ENCODE measurements at regions of chr5 and their contacts with region 1.

Region 1: DNA sequence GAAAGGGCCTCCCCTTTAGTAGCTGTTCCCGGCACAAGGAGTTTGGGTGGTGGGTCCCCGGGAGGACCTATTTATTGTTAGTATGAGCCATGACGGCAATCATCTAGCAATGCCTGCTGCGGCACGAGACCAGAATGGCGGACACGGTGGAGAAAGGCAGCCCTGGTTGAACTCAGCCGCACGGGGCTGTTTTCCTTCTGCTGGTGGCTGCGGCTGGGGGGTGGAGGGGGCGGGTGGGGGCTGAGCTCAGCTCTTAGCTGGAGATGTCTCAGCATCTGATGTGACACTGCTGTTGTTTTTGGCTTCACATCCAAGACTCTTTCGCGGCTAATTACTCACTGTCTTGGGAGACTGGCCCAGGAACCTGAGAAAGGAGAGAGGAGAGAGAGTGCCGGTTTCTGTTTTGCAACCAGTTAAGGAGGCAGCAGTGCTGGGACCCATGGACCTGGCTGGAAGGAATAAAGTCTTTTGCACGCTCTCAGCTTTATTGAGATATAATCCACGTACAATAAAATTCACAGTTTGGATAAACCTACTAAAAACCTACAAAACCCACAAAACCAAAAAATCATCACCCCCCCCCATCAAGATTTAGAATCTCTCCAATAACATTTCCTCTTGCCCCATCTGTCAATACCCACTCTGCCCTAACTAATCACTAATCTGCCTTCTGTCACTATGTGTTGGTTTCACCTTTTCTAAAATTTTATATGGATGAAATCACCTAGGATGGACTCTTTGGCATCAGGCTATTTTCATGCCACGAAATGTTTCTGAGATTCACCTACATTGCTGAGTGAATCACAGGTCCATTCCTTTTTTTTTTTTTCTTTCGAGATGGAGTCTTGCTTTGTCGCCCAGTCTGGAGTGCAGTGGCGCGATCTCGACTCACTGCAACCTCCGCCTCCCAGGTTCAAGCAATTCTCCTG is 81.8 kb upstream of the NEURL1B start:
- DNase-seq: peak; percentile 69
- H3K4me3 ChIP-seq: peak overlapping the region; percentile 14 to 15
- H3K27ac ChIP-seq: peak overlapping the region; percentile 74 to 82
- H3K4me1 ChIP-seq: peaks cover 18% of the 10 kb centered on the region
- H3K27me3 ChIP-seq: no peaks in the 10 kb centered on the region
- CTCF ChIP-seq: no peak
- POLR2A ChIP-seq: no peak

Region 2: GRCh38 chr5:172640822-172641358 is 81.6 kb after region 1 on chr5 and contains the start of gene NEURL1B:
- intact Hi-C with region 1: loop called (anchors 5 kb)
- DNase-seq: peak; percentile 78
- H3K4me3 ChIP-seq: peak within 1 kb of the TSS; percentile 62 to 83
- H3K27ac ChIP-seq: peak within 1 kb of the TSS; percentile 83 to 86
- H3K4me1 ChIP-seq: peaks cover 3% of the 10 kb centered on the region
- H3K27me3 ChIP-seq: no peaks in the 10 kb centered on the region
- CTCF ChIP-seq: peak in 1 of 4 experiments; percentile 28
- POLR2A ChIP-seq: peak; percentile 60
- total RNA-seq, gene NEURL1B: 23.9 to 39.9 TPM

Region 3: DNA sequence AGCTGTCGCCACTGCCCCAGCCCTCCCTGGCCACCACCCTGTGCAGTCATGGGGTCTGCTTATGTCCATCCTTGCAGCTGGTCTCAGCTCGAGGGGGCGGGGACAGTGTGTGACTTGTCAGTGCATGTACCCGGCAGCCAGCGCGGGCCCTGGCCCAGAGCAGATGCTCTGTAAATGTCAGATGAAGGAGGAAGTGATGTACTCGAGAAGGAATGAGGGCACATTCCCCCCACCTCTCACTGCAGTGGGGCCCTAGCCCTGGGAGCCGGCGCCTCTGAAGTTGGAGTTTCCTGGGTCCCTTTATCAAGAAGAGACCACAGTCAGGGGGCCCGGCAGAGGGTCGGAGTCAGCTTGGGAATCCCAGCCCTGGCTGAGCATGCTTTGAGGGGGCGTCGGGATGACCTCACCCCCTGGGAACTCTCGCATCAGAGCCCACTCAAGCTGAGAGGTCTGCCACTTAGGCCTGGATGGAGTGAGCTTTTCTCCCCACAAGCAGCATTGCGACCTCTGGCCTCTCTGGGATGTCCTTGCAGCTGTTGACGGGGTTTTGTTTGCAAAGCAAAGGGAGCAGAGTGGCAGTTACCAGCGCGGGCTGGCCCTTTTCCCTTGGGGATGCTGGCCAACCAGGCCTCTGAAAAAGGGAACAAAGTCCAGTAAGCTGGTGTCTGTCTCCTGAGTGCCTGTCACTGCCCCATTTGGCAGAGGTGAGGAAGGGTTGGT is 100.8 kb after region 1 on chr5:
- intact Hi-C with region 1: loop called (anchors 5 kb)
- DNase-seq: peak; percentile 84
- H3K4me3 ChIP-seq: no peak overlapping the region
- H3K27ac ChIP-seq: peak overlapping the region; percentile 79 to 82
- H3K4me1 ChIP-seq: peaks cover 12% of the 10 kb centered on the region
- H3K27me3 ChIP-seq: no peaks in the 10 kb centered on the region
- CTCF ChIP-seq: no peak
- POLR2A ChIP-seq: no peak

Measured in prostate gland (tissue), 2 donors.